Tibial artery (tissue), 4 donors: ENCODE measurements at regions of chr7 and their contacts with region 1.

Region 1: DNA sequence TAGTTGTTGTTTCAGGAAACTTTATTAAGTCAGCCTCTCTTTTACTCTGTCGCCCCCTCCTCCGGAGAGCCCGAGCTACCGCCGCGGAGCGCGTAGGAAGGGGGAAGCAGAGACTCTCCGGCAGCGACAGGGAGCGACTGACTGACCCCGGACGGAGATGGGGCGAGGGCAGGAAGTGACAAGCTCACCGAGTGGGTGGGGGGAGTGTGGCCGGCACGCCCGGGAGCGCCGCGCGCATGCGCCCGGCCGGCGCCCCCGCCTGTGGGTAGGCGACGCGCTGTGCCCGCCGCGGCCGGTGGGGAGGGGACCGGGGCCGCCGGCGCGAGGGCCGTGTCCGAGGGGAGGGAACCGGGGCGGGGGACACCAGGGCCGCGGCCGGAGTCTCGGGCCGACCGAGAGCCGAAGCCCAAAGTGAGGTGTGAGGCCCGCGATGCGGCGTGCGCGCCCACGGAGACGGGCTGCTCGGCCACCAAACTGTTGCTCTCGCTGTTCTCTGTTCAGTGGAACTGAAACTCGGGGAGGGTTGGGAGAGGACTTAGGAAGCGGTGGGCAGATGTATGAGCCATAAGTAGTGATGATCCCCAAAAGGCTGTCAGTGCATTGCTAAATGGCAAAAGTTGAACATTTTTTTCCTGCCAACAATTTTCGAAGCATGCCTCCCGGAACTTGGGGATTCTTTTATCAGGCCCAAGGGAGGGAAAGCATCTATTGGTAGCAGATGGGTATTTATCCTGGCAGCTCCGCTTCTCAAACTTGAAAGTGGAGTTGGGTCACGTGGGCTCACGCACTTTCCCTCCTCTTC is at the start of gene ZNF800:
- DNase-seq: peak; percentile 86 to 94
- H3K4me3 ChIP-seq: peak within 1 kb of the TSS; percentile 89
- H3K27ac ChIP-seq: peak within 1 kb of the TSS; percentile 78 to 94
- H3K4me1 ChIP-seq: peaks cover 0 to 34% (median 9%) of the 10 kb centered on the region in 4 donors
- H3K27me3 ChIP-seq: no peaks in the 10 kb centered on the region
- CTCF ChIP-seq: peak in 1 of 2 experiments; percentile 8

Region 2: DNA sequence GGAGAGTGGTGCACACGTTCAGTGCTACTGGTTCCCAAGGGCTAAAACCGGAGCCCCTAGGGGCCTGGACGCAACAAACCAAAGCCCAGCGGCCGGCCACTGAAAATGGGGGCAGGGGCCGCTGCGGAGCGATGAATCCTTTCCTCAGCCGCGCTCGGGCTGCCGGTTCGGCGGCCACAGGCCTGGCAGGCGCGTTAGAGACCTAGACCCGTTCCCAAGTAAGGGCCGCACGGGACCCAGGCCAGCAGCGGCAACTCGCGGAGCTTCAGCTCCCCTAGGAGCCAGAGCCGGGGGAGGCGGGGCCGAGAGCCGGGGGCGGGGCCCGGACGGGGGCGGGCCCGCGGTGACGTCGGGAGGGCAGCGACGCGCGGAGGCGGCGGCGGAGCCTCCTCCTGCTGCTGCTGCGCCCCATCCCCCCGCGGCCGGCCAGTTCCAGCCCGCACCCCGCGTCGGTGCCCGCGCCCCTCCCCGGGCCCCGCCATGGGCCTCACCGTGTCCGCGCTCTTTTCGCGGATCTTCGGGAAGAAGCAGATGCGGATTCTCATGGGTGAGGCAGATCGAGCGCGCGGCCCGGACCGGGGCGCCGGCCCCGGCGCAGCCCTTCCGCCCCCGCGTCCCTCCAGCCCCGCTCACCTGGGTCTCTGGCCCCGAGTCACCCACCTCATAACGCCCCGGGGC is 195.4 kb after region 1 on chr7 and contains the start of gene ARF5:
- intact Hi-C with region 1: loop called (anchors 2 kb)
- DNase-seq: peak; percentile 85 to 94
- H3K4me3 ChIP-seq: peak within 1 kb of the TSS; percentile 97 to 98
- H3K27ac ChIP-seq: peak within 1 kb of the TSS; percentile 90 to 93
- H3K4me1 ChIP-seq: peaks cover 0 to 47% (median 37%) of the 10 kb centered on the region in 4 donors
- H3K27me3 ChIP-seq: no peaks in the 10 kb centered on the region
- CTCF ChIP-seq: no peak

Region 3: DNA sequence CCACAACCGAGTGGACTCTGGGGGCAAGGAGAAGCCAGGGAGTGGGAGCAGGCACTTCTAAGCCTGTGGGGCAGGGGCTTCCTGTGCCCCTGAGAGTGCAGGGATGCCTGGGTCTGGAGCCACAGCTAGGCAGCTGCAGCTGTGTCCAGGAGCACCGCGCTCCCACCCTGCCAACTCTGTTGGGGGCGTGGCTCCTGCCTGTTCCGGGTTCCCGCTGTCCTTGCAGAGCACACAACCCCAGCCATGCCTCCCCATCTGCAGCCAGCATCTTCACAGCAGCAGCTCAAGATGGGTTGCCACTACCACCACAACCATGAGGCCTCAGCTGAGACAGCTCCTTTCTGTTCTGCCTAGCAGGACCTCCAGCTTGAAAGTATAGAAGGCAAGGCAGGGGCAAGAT is 216.5 kb after region 1 on chr7:
- intact Hi-C with region 1: no loop called
- DNase-seq: no peak
- H3K4me3 ChIP-seq: no peak overlapping the region
- H3K27ac ChIP-seq: no peak overlapping the region
- H3K4me1 ChIP-seq: no peaks in the 10 kb centered on the region
- H3K27me3 ChIP-seq: peaks cover 0 to 6% of the 10 kb centered on the region in 2 donors
- CTCF ChIP-seq: no peak

Region 4: GRCh38 chr7:127651556-127652332 is 259.0 kb after region 1 on chr7 and contains the start of gene SND1:
- intact Hi-C with region 1: loop called (anchors 10 kb)
- DNase-seq: peak; percentile 99 to 100
- H3K4me3 ChIP-seq: peak within 1 kb of the TSS; percentile 91 to 96
- H3K27ac ChIP-seq: peak within 1 kb of the TSS; percentile 85 to 98
- H3K4me1 ChIP-seq: peaks cover 7 to 37% (median 24%) of the 10 kb centered on the region in 4 donors
- H3K27me3 ChIP-seq: no peaks in the 10 kb centered on the region
- CTCF ChIP-seq: no peak

Region 5: DNA sequence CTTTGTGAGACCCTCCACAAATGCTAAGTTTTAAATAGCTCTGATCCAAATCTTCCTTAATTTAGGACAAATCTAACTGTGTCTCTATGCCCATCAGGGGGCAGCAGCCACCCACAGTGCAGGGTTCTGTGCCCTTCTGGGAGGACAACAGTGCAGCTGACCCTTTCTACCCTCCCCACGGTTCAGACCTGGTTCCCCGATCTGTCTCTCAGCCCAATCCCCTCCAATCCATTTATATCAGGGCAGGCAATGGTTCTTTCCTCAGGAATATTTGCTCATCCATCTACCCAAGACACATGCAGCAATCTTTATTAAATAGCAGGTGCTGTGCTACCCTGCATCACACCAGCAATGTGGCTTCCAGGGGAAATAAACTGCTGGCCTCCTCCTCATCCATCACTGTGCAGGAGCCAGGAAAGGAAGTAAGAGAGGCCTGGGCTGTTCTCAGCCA is 954.9 kb after region 1 on chr7:
- intact Hi-C with region 1: loop called (anchors 2 kb)
- DNase-seq: no peak
- H3K4me3 ChIP-seq: no peak overlapping the region
- H3K27ac ChIP-seq: no peak overlapping the region
- H3K4me1 ChIP-seq: peaks cover 0 to 21% (median 18%) of the 10 kb centered on the region in 4 donors
- H3K27me3 ChIP-seq: peaks cover 0 to 24% of the 10 kb centered on the region in 2 donors
- CTCF ChIP-seq: peak; percentile 44 to 59